ENCODE measurements at regions of chr10 and their contacts with region 1.

Region 1: DNA sequence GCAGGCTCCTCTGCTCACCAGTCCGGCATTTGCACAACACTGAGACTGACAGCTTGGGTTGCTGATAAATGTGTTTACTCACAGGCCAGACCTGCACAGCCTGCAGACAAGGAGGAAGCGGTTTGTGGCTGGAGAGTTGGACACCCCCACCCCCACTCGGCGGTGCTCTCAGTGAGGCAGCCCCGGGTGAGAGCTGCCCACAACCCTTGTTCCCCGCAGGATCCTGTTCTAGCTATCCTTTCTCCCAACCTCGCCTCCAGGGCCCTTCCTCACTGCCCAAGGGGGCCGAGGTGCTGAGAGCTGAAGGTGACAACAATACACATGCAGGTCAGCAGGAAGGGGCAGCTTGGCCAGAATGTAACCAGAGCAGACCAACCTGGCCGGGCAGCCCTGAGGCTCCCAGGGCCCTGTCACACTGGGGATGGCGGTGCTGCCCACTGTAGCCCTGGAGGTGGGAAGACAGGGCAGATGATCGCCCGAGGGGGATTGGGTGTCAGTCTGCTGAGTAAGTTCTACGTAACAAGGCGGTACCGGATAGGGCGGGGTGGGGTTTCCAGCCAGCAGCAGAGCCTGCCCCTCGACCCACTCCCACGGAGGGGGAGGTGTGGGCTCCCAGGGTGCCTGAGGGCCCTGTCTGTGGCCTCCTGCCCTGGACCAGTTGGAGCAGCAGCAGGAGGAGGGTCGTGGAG is 2.1 kb upstream of the ADAM8 start:
- DNase-seq: peak; percentile 46 to 92 (median 75)
- ATAC-seq: peak; percentile 37
- H3K4me3 ChIP-seq: peak overlapping the region in 1 of 2 experiments; percentile 30
- H3K4me3 Mint-ChIP-seq: peak overlapping the region; percentile 79
- H3K27ac ChIP-seq: peak overlapping the region; percentile 58 to 94
- H3K27ac Mint-ChIP-seq: peak overlapping the region; percentile 95
- H3K4me1 ChIP-seq: peaks cover 50% of the 10 kb centered on the region
- H3K4me1 Mint-ChIP-seq: peaks cover 40% of the 10 kb centered on the region
- H3K27me3 ChIP-seq: no peaks in the 10 kb centered on the region
- H3K27me3 Mint-ChIP-seq: no peaks in the 10 kb centered on the region
- CTCF ChIP-seq: no peak

Region 2: GRCh38 chr10:133139551-133140065 is 139.1 kb before region 1 on chr10:
- CTCF ChIA-PET with region 1: interaction called, 4 read pairs
- POLR2A ChIA-PET with region 1: no interaction called
- intact Hi-C with region 1: loop called in 1 of 2 experiments (anchors 10 kb)
- DNase-seq: peak in 2 of 9 experiments; percentile 2 to 37
- ATAC-seq: no peak
- H3K4me3 ChIP-seq: no peak overlapping the region
- H3K4me3 Mint-ChIP-seq: no peak overlapping the region
- H3K27ac ChIP-seq: no peak overlapping the region
- H3K27ac Mint-ChIP-seq: no peak overlapping the region
- H3K4me1 ChIP-seq: no peaks in the 10 kb centered on the region
- H3K4me1 Mint-ChIP-seq: peaks cover 2% of the 10 kb centered on the region
- H3K27me3 ChIP-seq: peaks cover 0 to 2% of the 10 kb centered on the region in 2 experiments
- H3K27me3 Mint-ChIP-seq: peaks cover 16% of the 10 kb centered on the region
- CTCF ChIP-seq: no peak

Measured in CD8-positive, alpha-beta T cell (primary cell).